GM13976 (cell line): ENCODE measurements at regions of chr19 and their contacts with region 1.

Region 1: DNA sequence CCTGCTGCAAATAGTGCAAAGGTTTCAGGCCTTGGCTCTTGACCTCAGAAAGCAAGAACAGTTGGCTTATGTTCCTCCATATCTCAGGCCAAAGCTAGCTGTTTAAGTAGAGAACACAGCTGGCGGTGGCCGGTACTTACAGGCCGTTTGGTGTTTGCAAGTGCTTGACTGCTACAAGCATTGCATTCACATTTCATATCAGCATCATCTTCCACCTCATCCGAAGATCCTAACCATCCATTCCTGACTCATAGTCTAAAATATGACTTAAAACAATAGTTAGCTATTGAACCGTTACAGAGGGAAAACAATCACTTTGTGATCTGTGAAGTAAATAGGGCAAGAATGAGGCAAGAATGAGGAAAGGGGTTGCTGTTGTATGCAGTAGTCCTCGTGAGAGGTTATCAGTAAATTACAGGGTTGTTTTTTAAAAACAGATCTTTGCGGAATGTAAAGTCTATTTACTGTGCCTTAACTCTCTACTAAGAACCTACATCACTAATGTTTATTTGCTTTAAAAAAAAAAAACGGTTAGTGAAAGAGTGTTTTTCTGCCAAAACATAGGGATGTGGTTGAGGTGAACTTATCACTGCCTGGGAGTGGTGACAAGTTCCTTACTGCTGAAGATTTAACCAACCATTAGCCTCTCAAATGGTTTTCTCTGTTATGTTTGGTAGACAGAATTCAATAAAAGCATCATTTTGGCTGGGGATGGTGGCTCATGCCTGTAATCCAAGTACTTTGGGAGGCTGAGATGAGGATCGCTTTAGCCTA is 21.6 kb upstream of the WDR88 start:
- DNase-seq: no peak
- CTCF ChIP-seq: no peak

Region 2: GRCh38 chr19:32971715-32972540 is 138.4 kb before region 1 on chr19 and contains the starts of genes CEP89 and FAAP24:
- in situ Hi-C with region 1: loop called (anchors 10 kb)
- DNase-seq: peak; percentile 99
- CTCF ChIP-seq: no peak

Region 3: GRCh38 chr19:33226550-33227241 is 116.4 kb after region 1 on chr19:
- in situ Hi-C with region 1: no loop called
- DNase-seq: no peak
- CTCF ChIP-seq: no peak